RWPE1 (cell line): ENCODE measurements at regions of chr6 and their contacts with region 1.

Region 1: GRCh38 chr6:41027799-41028628 is 11.0 kb downstream of the UNC5CL start:
- DNase-seq: peak; percentile 75
- H3K27ac ChIP-seq: no peak overlapping the region; the same call in 1 of the 2 replicates
- CTCF ChIP-seq: peak; percentile 95

Region 2: DNA sequence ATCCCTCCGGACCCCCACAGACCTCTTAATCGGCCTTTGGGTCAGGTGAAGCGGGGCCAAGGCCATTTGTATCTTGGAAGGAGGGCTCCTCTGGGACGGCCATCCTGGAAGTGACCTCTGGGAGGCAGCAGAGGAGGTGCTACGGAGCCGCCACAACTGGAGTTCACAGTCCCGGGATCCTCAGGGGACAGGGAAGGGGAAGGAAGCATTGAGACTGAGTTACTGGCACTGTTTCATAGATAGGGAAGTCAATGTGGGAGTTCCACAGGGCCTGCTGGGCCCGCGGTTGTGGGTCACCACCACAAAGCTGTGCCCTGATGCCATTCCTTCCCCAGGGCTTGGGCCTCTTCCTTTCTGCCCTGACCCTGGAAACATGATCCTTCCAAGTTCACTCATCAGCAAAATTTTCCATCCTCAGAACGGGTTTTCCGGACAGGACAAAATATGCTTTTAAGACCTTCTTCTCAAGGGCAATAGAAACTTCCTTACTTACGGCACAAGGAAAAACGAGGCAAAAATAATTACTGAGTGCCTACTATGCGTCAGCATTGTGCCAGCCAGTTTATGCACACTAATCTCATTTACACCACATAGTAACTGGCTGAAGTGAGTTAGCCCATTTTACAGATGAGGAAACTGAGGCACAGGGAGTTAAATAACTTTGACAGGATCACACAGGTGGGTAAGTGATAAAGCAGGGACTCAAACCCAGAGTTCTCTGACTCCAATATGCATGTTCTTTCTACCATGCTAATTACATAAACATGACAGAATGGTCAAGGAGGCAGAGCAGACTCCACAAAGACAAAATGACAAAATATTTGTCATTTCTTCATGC is 132.8 kb before region 1 on chr6:
- CTCF ChIA-PET with region 1: interaction called, 10 read pairs
- POLR2A ChIA-PET with region 1: no interaction called
- DNase-seq: peak; percentile 59
- H3K27ac ChIP-seq: no peak overlapping the region
- CTCF ChIP-seq: no peak; the same call in 1 of the 2 replicates